Aorta (tissue), 5 donors: ENCODE measurements at regions of chr1 and their contacts with region 1.

Region 1: DNA sequence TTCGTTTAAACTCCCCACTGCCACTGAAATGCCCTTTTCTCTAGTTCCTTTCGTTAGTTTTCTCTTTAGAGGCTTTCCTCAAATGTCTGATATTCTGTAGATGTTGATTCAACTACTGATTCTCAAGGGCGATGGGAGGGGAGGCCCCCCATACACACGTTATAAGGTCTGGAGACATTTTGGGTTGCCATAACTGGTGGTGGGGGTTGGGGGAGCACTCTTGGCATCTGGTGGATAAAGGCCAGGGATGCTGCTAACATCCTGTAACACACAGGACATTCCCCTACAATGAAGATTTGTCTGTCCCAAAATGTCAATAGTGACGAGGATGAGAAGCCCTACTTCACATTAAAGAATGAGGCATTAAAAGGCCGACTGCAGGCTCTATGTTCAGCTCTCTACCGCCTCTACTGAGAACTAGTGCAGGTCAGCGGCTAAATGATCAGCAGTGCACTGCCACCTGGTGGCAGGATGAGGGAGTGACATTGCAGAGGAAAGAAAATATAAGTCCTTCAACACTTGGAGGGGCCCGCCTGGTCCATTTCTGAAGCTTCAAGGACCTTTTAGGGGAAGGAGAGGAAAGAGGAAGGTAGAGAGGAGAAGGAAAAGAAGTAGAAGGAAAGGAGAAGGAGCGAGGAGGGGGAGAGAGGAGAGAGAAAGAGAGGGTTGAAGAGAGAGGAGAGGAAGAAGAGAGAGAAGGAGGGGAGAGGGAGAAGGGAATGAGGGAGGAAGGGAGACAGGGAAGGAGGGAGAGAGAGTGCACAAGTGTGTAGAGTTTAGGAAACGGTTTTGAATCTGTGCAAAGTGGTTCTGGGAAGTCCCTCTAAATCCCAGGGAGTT is 29.4 kb downstream of the ALG14 start:
- DNase-seq: peak; percentile 84 to 91
- ATAC-seq: peak; percentile 93
- H3K4me3 ChIP-seq: no peak overlapping the region
- H3K27ac ChIP-seq: peak overlapping the region in 1 of 2 donors; percentile 17
- H3K4me1 ChIP-seq: peaks cover 0 to 1% of the 10 kb centered on the region in 2 donors
- H3K27me3 ChIP-seq: no peaks in the 10 kb centered on the region

Region 2: DNA sequence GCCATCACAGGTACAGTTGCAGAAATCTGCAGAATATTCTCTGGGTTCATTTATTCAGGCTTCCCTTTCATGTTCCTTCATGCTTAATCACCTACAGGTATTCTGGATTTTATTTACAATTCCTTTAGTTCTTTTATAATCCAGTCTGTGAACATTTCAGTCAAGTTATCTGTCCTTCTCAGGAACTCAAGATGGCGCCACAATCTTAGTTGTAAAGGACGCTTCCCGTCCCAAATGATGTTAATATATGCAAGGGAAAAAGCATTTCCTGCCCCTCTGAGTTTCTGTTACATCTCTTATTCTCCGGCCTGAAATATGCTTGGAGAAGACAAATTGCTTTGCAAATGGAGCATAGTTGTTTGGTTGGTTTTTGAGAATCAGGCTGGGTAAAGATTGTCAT is 521.1 kb before region 1 on chr1:
- intact Hi-C with region 1: loop called in 1 of 2 experiments (anchors 10 kb)
- DNase-seq: no peak
- ATAC-seq: peak; percentile 65
- H3K4me3 ChIP-seq: no peak overlapping the region
- H3K27ac ChIP-seq: no peak overlapping the region
- H3K4me1 ChIP-seq: peaks cover 0 to under 1% of the 10 kb centered on the region in 2 donors
- H3K27me3 ChIP-seq: no peaks in the 10 kb centered on the region

Region 3: DNA sequence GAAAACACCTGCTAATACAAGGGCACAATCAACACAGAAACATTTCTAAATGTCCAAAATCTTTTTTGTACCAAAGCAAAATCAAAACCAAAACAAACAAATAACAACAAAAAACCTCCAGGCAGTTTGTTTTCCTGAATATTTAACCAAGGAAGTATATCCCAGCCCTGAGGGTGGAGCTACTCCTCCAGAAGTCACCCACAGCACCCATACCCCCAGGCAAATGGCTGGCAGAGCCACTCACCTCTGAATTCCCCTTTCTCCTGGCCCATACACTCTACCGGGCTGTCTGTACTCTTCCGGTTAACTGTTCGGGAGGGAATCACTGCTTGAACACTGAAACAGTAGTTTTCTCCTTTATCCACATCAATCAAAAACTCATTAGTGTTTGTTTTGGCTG is 511.3 kb before region 1 on chr1:
- intact Hi-C with region 1: loop called (anchors 10 kb)
- DNase-seq: no peak
- ATAC-seq: no peak
- H3K4me3 ChIP-seq: no peak overlapping the region
- H3K27ac ChIP-seq: no peak overlapping the region
- H3K4me1 ChIP-seq: peaks cover 0 to 4% of the 10 kb centered on the region in 2 donors
- H3K27me3 ChIP-seq: no peaks in the 10 kb centered on the region

Region 4: DNA sequence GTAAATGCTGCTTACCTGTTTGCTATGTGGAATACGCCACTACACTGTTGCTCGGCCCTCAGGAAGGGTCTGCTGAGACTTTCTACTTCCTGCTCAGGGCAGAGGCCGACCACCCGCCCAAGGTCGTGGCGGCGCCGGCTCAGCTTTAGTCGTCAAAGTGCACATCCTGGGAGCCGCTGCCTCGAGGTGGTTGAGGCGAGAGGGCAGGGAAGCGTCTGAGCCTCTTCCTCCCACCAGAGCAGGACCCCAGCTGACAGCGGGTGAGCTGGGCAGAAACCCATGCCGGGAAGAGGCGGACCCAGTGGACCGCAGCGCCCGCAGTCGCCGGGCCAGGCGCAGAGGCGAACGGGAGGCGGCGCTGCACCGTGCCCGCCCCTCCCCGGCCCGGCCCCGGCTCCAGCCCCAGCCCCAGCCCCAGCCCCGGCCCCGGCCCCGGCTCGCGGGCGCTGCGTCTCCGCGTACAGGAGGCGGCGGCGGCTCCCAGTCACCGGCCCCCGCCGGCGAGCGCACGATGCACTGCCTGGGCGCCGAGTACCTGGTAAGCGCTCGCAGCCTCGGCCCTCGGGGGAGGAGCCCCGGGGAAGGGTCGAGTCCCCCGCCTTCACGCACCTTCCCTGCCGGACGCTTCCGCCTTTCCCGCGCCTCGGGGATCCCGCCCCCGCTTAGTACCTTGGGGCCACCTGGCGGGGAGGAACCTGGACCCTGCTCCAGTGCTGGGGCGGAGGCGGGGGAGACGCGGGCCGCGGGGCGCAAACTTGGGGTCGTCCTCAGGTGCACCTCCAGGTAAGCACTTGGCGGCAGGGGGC is 223.2 kb before region 1 on chr1 and contains the start of gene SLC44A3:
- intact Hi-C with region 1: loop called in 1 of 2 experiments (anchors 1 kb)
- DNase-seq: peak; percentile 73 to 87
- ATAC-seq: peak; percentile 93
- H3K4me3 ChIP-seq: peak within 1 kb of the TSS; percentile 48 to 54
- H3K27ac ChIP-seq: no peak within 1 kb of the TSS
- H3K4me1 ChIP-seq: no peaks in the 10 kb centered on the region
- H3K27me3 ChIP-seq: no peaks in the 10 kb centered on the region
- total RNA-seq, gene SLC44A3: 3.3 to 7.2 TPM

Region 5: GRCh38 chr1:94854458-94855306 is 188.7 kb before region 1 on chr1:
- intact Hi-C with region 1: loop called (anchors 1 kb)
- DNase-seq: peak; percentile 92 to 93
- ATAC-seq: peak; percentile 97
- H3K4me3 ChIP-seq: peak overlapping the region in 1 of 2 donors; percentile 36
- H3K27ac ChIP-seq: peak overlapping the region; percentile 34 to 68
- H3K4me1 ChIP-seq: peaks cover 0 to 3% of the 10 kb centered on the region in 2 donors
- H3K27me3 ChIP-seq: no peaks in the 10 kb centered on the region

Region 6: GRCh38 chr1:94926915-94927404 is 116.4 kb before region 1 on chr1 and contains the start of gene CNN3:
- intact Hi-C with region 1: loop called (anchors 1 to 2 kb)
- DNase-seq: peak; percentile 95 to 97
- ATAC-seq: peak; percentile 94
- H3K4me3 ChIP-seq: peak within 1 kb of the TSS; percentile 81 to 89
- H3K27ac ChIP-seq: peak within 1 kb of the TSS; percentile 92 to 99
- H3K4me1 ChIP-seq: peaks cover 0 to 8% of the 10 kb centered on the region in 2 donors
- H3K27me3 ChIP-seq: no peaks in the 10 kb centered on the region
- total RNA-seq, gene CNN3: 386 to 463 TPM

Region 7: GRCh38 chr1:95023399-95024043 is 19.8 kb before region 1 on chr1:
- intact Hi-C with region 1: loop called in 1 of 2 experiments (anchors 2 kb)
- DNase-seq: no peak
- ATAC-seq: peak; percentile 68
- H3K4me3 ChIP-seq: no peak overlapping the region
- H3K27ac ChIP-seq: peak overlapping the region in 1 of 2 donors; percentile 76
- H3K4me1 ChIP-seq: peaks cover 5 to 9% of the 10 kb centered on the region in 2 donors
- H3K27me3 ChIP-seq: no peaks in the 10 kb centered on the region